Ovary (tissue), 10 donors: ENCODE measurements at regions of chr5 and their contacts with region 1.

Region 1: DNA sequence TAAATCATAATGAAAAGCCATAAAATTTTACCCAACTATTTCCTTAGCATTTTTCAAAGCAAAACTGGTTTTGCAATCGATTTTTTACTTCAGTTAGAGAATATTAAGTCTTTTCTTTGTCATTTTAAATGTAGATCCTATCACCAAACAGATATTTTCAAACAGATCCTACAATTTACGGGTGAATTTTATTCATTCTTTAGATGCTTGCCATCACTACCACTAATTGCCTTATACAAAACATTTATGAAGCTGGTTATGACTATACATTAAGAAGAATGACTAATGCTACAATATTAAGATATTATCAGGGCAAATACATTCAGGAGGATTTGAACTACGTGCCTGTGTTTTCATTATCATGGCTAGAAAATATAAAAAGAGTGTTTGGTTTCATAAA is 196.9 kb downstream of the CWC27 start:
- DNase-seq: no peak
- H3K4me3 ChIP-seq: no peak overlapping the region
- H3K27ac ChIP-seq: no peak overlapping the region
- H3K4me1 ChIP-seq: no peaks in the 10 kb centered on the region
- H3K27me3 ChIP-seq: no peaks in the 10 kb centered on the region
- CTCF ChIP-seq: no peak
- EP300 ChIP-seq: no peak
- POLR2A ChIP-seq: no peak

Region 2: GRCh38 chr5:63843190-63843589 is 1122.4 kb before region 1 on chr5:
- intact Hi-C with region 1: no loop called
- DNase-seq: no peak
- H3K4me3 ChIP-seq: no peak overlapping the region
- H3K27ac ChIP-seq: no peak overlapping the region
- H3K4me1 ChIP-seq: no peaks in the 10 kb centered on the region
- H3K27me3 ChIP-seq: no peaks in the 10 kb centered on the region
- CTCF ChIP-seq: no peak
- EP300 ChIP-seq: no peak
- POLR2A ChIP-seq: no peak

Region 3: DNA sequence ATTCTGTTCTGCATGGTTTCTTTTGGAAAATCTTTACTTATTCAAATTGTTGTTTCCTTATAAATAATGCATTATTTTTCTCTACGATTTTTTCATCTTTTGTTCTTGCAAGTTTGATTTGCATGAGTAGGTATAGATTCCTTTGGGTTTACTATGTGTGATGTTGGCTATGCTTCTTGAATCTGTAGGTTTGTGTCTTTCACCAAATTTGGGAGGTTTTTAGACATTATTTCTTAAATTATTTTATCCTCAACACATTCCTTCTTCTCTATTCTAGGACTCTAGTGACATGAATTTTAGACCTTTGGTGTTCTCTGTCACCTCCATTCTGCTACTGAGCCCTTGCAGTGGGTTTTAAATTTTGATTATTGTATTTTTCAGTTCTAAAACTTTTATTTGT is 22.2 kb after region 1 on chr5:
- intact Hi-C with region 1: no loop called
- DNase-seq: no peak
- H3K4me3 ChIP-seq: no peak overlapping the region
- H3K27ac ChIP-seq: no peak overlapping the region
- H3K4me1 ChIP-seq: no peaks in the 10 kb centered on the region
- H3K27me3 ChIP-seq: no peaks in the 10 kb centered on the region
- CTCF ChIP-seq: no peak
- EP300 ChIP-seq: no peak
- POLR2A ChIP-seq: no peak

Region 4: GRCh38 chr5:65035211-65036206 is 69.9 kb after region 1 on chr5:
- intact Hi-C with region 1: no loop called
- DNase-seq: peak; percentile 91 to 94 (median 93)
- H3K4me3 ChIP-seq: peak overlapping the region; percentile 69
- H3K27ac ChIP-seq: peak overlapping the region; percentile 92 to 94
- H3K4me1 ChIP-seq: peaks cover 5% of the 10 kb centered on the region
- H3K27me3 ChIP-seq: no peaks in the 10 kb centered on the region
- CTCF ChIP-seq: peak in 1 of 3 donors; percentile 36
- EP300 ChIP-seq: no peak
- POLR2A ChIP-seq: peak; percentile 50

Region 5: DNA sequence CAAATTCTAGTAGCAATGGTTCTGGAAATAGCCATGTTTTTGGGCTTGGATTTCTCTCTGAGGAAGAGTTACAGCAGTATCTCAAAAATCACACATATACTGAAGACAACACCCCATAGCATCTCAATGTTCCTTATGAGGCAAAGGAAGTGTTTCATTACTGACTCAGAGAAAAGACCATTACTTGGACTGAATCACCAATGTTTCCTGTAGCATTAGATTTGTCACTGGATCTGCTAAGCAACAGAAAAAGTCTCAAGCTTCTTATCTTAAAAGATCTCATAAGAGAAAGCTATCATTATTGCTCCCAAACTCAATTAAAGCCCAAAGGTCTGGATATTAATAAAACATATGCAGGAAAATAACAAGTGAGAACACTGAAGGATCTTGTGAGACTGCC is 243.7 kb after region 1 on chr5:
- intact Hi-C with region 1: loop called in 1 of 4 experiments (anchors 5 kb)
- DNase-seq: no peak
- H3K4me3 ChIP-seq: no peak overlapping the region
- H3K27ac ChIP-seq: no peak overlapping the region
- H3K4me1 ChIP-seq: no peaks in the 10 kb centered on the region
- H3K27me3 ChIP-seq: no peaks in the 10 kb centered on the region
- CTCF ChIP-seq: no peak
- EP300 ChIP-seq: no peak
- POLR2A ChIP-seq: no peak